Calu3 (cell line): ENCODE measurements at regions of chr3 and their contacts with region 1.

Region 1: DNA sequence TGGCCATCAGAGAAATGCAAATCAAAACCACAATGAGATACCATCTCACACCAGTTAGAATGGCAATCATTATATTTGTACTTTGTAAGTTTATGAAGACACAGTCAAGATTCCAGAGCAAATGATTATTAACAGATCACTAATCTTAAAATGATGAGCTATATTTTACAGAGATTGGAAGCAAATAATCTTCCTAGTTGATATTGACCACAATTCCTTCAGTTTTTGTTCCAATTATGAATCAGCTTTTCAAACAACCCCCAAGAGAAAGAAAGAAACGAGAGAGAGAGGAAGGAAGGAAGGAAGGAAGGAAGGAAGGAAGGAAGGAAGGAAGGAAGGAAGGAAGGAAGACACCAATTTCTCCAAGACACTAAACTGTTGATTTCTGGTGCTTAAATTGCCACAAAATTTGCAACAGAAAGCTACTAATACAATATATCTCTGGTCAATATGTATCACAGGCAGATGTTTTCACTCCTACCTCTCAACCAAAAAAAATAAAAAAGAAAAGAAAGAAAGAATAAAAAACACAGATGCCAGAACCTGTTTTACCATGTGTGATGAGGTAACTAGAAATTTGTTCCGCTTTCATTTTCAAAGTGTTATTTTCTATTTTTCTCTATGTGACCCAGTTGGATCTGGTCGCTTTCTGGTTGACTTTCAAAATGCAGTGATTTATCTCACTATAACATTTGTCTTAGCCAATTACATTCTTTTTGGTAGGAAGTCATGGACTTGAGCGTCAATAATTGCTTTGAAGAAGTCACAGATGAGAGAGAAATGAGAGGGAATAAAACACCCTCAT is 1609.6 kb downstream of the SI start:
- DNase-seq: no peak
- H3K4me3 Mint-ChIP-seq: no peak overlapping the region
- H3K27ac Mint-ChIP-seq: no peak overlapping the region
- H3K4me1 Mint-ChIP-seq: no peaks in the 10 kb centered on the region
- H3K27me3 Mint-ChIP-seq: no peaks in the 10 kb centered on the region
- CTCF ChIP-seq: no peak

Region 2: DNA sequence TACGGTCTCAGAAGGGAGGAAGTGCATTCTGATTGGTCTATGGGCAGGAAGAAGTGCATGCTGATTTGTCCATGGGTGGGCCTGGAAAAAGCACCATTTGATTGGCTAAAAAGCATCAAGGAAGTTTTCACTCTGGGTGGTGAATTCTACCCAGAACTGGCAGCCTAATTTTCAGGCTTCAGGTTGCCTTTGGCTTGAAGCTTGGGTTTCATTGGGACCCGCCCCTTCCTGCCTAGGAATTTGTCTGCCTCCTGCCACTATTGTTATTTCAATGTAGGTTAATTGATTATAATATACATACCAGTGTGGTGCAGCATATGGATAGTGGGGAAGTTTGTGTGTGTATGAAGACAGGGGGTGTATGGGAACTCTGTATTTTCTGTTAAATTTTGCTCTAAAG is 253.7 kb after region 1 on chr3:
- CTCF ChIA-PET with region 1: no interaction called
- intact Hi-C with region 1: no loop called
- DNase-seq: no peak
- H3K4me3 Mint-ChIP-seq: no peak overlapping the region
- H3K27ac Mint-ChIP-seq: no peak overlapping the region
- H3K4me1 Mint-ChIP-seq: no peaks in the 10 kb centered on the region
- H3K27me3 Mint-ChIP-seq: no peaks in the 10 kb centered on the region
- CTCF ChIP-seq: no peak

Region 3: GRCh38 chr3:163957087-163957486 is 488.4 kb after region 1 on chr3:
- CTCF ChIA-PET with region 1: no interaction called
- intact Hi-C with region 1: loop called (anchors 5 kb)
- DNase-seq: no peak
- H3K4me3 Mint-ChIP-seq: no peak overlapping the region
- H3K27ac Mint-ChIP-seq: no peak overlapping the region
- H3K4me1 Mint-ChIP-seq: no peaks in the 10 kb centered on the region
- H3K27me3 Mint-ChIP-seq: no peaks in the 10 kb centered on the region
- CTCF ChIP-seq: no peak